CD4-positive, alpha-beta memory T cell (primary cell): ENCODE measurements at regions of chr13 and their contacts with region 1.

Region 1: GRCh38 chr13:112942689-112943308 is 26.2 kb upstream of the MCF2L start:
- DNase-seq: peak; percentile 87 to 95 (median 89)
- H3K4me3 ChIP-seq: peak overlapping the region in 1 of 2 donors; percentile 53
- H3K4me3 Mint-ChIP-seq: peak overlapping the region; percentile 87 to 98 (median 95)
- H3K27ac ChIP-seq: no peak overlapping the region
- H3K27ac Mint-ChIP-seq: peak overlapping the region in 4 of 7 donors; percentile 14 to 88 (median 83)
- H3K4me1 ChIP-seq: peaks cover 13% of the 10 kb centered on the region
- H3K4me1 Mint-ChIP-seq: peaks cover 2 to 11% (median 5%) of the 10 kb centered on the region in 4 donors
- H3K27me3 ChIP-seq: no peaks in the 10 kb centered on the region
- H3K27me3 Mint-ChIP-seq: peaks cover 5 to 25% of the 10 kb centered on the region in 2 donors

Region 2: DNA sequence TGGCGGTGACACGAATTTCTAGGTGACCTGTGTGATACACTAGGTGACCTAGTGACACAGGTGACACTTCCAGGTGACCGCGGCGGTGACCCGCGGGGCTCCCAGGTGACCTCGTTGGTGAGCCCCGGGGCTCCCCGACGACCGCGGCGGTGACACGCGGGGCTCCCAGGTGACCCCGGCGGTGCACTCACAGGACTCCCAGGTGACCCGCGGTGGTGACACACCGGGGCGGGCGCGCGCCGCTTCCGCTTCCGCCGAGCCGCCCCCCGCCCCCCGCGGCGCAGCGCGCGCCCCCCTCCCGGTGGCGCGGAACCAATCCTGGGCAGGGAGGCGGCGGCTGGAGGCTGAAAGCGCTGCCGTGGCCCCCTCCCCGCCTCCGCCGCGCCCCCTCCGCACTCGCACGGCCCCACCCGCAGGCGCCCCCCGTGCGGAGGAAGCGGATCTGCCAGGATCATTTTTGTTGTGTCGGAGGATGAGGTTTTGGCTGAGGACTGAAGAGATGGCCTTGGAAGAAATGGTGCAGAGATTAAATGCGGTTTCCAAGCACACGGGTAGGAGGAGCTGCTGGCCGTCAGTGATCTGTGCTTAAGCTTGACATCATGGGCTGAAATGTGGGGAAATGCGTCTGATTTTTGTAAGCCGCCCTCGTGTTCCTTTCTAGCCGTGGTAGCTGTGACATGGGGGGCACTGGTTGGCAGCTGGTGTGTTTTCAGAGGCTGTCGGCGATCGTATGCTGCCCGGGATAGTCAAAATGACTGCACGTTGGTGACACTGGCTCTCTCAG is 26.3 kb after region 1 on chr13 and contains the start of gene MCF2L:
- CTCF ChIA-PET with region 1: interaction called, 7 read pairs
- POLR2A ChIA-PET with region 1: interaction called, 3 read pairs
- intact Hi-C with region 1: loop called (anchors 1 kb)
- DNase-seq: peak; percentile 68 to 79 (median 76)
- H3K4me3 ChIP-seq: peak within 1 kb of the TSS; percentile 62 to 64
- H3K4me3 Mint-ChIP-seq: peak within 1 kb of the TSS; percentile 91 to 98 (median 96)
- H3K27ac ChIP-seq: peak within 1 kb of the TSS; percentile 57
- H3K27ac Mint-ChIP-seq: peak within 1 kb of the TSS; percentile 89 to 97 (median 94)
- H3K4me1 ChIP-seq: peaks cover 18% of the 10 kb centered on the region
- H3K4me1 Mint-ChIP-seq: peaks cover 19 to 38% (median 29%) of the 10 kb centered on the region in 4 donors
- H3K27me3 ChIP-seq: no peaks in the 10 kb centered on the region
- H3K27me3 Mint-ChIP-seq: no peaks in the 10 kb centered on the region
- total RNA-seq, gene MCF2L: 17.5 to 18.9 TPM

Region 3: DNA sequence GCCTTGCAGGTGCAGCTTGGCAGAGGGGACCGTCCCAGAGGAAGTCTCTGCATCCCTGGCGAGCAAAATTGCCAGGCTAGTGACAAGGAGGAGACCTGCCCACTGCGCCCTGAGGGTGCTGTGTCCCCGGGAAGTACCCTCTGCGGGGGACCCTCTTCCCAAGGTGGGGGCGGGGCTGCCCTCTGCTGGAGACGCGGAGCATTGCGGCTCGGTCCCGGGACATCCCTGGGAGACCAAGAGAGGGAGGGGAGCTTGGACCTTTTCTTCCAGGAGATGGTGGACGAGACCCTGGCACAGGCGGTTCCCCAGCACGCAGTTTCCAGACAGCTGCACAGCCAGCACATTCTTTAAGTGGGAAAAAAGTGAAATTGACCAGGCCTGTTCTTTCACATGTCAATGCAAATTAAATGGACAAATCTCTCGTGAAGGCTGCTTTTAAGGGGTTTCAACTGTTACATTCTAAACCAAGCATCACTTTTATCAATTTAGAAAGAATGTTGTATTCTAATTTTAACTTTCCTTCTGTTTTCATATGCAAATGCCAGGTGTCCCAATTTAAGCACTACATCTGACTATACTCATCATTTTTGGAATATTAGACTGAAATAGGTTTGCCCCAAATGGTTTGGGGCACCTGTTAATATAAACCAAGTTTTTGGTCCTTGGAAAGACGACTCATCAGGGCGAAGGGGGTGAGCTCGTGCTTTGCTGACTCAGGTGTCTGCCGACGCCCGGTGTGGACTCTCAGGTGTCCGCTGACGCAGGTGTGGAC is 86.9 kb after region 1 on chr13:
- CTCF ChIA-PET with region 1: interaction called, 24 read pairs
- POLR2A ChIA-PET with region 1: interaction called, 4 read pairs
- intact Hi-C with region 1: loop called (anchors 1 kb)
- DNase-seq: peak in 4 of 5 donors; percentile 11 to 39 (median 21)
- H3K4me3 ChIP-seq: no peak overlapping the region
- H3K4me3 Mint-ChIP-seq: no peak overlapping the region
- H3K27ac ChIP-seq: no peak overlapping the region
- H3K27ac Mint-ChIP-seq: no peak overlapping the region
- H3K4me1 ChIP-seq: no peaks in the 10 kb centered on the region
- H3K4me1 Mint-ChIP-seq: peaks cover 0 to 4% (median 1%) of the 10 kb centered on the region in 4 donors
- H3K27me3 ChIP-seq: no peaks in the 10 kb centered on the region
- H3K27me3 Mint-ChIP-seq: no peaks in the 10 kb centered on the region

Region 4: DNA sequence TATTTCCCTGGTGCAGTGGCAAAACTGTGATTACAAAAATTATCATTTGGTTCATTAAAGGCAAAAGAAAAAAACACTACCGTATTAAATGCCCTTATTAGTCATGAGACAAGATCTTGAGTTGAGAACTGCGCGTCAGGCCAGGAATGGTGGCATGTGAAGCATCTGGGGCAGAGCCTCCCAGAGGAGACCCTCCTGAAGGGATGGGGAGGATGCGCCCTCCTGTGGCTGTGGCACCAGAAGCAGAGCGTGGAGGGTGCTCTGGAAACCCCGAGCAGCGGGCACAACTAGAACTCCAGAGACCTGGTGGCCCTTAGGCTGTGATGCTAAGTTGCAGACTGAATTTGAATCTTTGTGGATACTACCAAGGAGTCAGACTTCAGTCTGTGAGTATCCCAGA is 278.1 kb after region 1 on chr13:
- CTCF ChIA-PET with region 1: no interaction called
- POLR2A ChIA-PET with region 1: no interaction called
- intact Hi-C with region 1: loop called (anchors 1 kb)
- DNase-seq: peak in 3 of 5 donors; percentile 12 to 25 (median 18)
- H3K4me3 ChIP-seq: no peak overlapping the region
- H3K4me3 Mint-ChIP-seq: no peak overlapping the region
- H3K27ac ChIP-seq: no peak overlapping the region
- H3K27ac Mint-ChIP-seq: peak overlapping the region in 5 of 7 donors; percentile 5 to 67 (median 55)
- H3K4me1 ChIP-seq: peaks cover 15% of the 10 kb centered on the region
- H3K4me1 Mint-ChIP-seq: peaks cover 22 to 31% (median 27%) of the 10 kb centered on the region in 4 donors
- H3K27me3 ChIP-seq: no peaks in the 10 kb centered on the region
- H3K27me3 Mint-ChIP-seq: no peaks in the 10 kb centered on the region

Region 5: GRCh38 chr13:113238536-113238935 is 295.7 kb after region 1 on chr13:
- CTCF ChIA-PET with region 1: interaction called, 10 read pairs
- POLR2A ChIA-PET with region 1: no interaction called
- intact Hi-C with region 1: no loop called
- DNase-seq: peak in 1 of 5 donors; percentile 7
- H3K4me3 ChIP-seq: no peak overlapping the region
- H3K4me3 Mint-ChIP-seq: no peak overlapping the region
- H3K27ac ChIP-seq: no peak overlapping the region
- H3K27ac Mint-ChIP-seq: no peak overlapping the region
- H3K4me1 ChIP-seq: no peaks in the 10 kb centered on the region
- H3K4me1 Mint-ChIP-seq: no peaks in the 10 kb centered on the region
- H3K27me3 ChIP-seq: no peaks in the 10 kb centered on the region
- H3K27me3 Mint-ChIP-seq: no peaks in the 10 kb centered on the region

Region 6: GRCh38 chr13:113296842-113297369 is 354.1 kb after region 1 on chr13 and contains the start of gene LAMP1:
- CTCF ChIA-PET with region 1: interaction called, 3 read pairs
- POLR2A ChIA-PET with region 1: no interaction called
- intact Hi-C with region 1: loop called (anchors 5 kb)
- DNase-seq: peak; percentile 95 to 100 (median 99)
- H3K4me3 ChIP-seq: peak within 1 kb of the TSS; percentile 73 to 80
- H3K4me3 Mint-ChIP-seq: peak within 1 kb of the TSS; percentile 95 to 99 (median 97)
- H3K27ac ChIP-seq: peak within 1 kb of the TSS; percentile 90
- H3K27ac Mint-ChIP-seq: peak within 1 kb of the TSS; percentile 96 to 100 (median 99)
- H3K4me1 ChIP-seq: peaks cover 41% of the 10 kb centered on the region
- H3K4me1 Mint-ChIP-seq: peaks cover 29 to 47% (median 38%) of the 10 kb centered on the region in 4 donors
- H3K27me3 ChIP-seq: no peaks in the 10 kb centered on the region
- H3K27me3 Mint-ChIP-seq: peaks cover 14% of the 10 kb centered on the region in 2 donors
- total RNA-seq, gene LAMP1: 119 to 126 TPM

Region 7: DNA sequence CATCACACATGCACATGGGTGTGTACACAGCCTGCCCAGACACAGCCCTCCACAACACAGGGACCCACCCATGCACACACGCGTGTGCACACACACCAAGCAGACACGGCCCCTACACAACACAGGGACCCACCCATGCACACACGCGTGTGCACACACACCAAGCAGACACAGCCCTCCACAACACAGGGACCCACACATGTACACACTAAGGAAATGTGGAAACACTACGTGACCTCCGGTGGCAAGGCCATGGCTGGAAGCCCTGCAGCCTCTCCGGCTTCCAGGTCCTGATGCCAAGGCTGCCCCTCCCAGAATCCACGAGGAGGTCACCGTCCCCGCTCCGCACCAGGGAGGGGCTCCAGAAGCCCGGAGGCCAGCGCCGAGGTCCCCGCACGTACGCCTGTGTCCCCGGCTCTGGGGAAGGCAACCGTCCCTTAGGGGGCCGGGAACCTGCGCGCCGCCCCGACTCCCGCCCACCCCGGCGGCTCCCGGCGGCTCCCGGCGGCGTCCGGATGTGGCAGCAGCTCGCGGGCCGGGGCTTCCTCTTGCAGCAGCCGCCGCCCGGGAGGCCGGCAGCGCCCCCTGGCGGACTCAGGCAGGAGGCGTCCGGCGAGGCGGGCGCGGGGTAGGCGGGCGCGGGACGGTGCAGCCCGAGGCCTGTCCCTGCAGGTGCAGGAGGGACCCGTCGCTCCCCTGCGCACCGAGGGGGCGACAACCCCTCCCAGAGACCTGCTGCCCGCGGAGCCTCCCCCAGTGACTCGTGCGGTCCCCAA is 451.0 kb after region 1 on chr13:
- CTCF ChIA-PET with region 1: interaction called, 30 read pairs
- POLR2A ChIA-PET with region 1: interaction called, 6 read pairs
- intact Hi-C with region 1: no loop called
- DNase-seq: peak; percentile 73 to 85 (median 83)
- H3K4me3 ChIP-seq: peak overlapping the region; percentile 5 to 70
- H3K4me3 Mint-ChIP-seq: peak overlapping the region; percentile 86 to 89 (median 88)
- H3K27ac ChIP-seq: no peak overlapping the region
- H3K27ac Mint-ChIP-seq: peak overlapping the region in 5 of 7 donors; percentile 36 to 86 (median 62)
- H3K4me1 ChIP-seq: peaks cover 11% of the 10 kb centered on the region
- H3K4me1 Mint-ChIP-seq: peaks cover 2 to 7% (median 4%) of the 10 kb centered on the region in 4 donors
- H3K27me3 ChIP-seq: no peaks in the 10 kb centered on the region
- H3K27me3 Mint-ChIP-seq: no peaks in the 10 kb centered on the region